Dendritic cell treated with granulocyte-macrophage colony-stimulating factor and Interleukin-4, amounts not matched to agents 40 ng/mL and 50 ng/mL, for 4 days (primary cell): ENCODE measurements at regions of chr3 and their contacts with region 1.

Region 1: GRCh38 chr3:13346481-13347389 is 73.4 kb downstream of the NUP210 start:
- H3K4me3 Mint-ChIP-seq: no peak overlapping the region
- H3K27ac Mint-ChIP-seq: peak overlapping the region; percentile 71
- H3K4me1 Mint-ChIP-seq: peaks cover 37% of the 10 kb centered on the region
- H3K27me3 Mint-ChIP-seq: no peaks in the 10 kb centered on the region

Region 2: GRCh38 chr3:13378155-13378554 is 31.4 kb after region 1 on chr3:
- intact Hi-C with region 1: no loop called
- H3K4me3 Mint-ChIP-seq: no peak overlapping the region
- H3K27ac Mint-ChIP-seq: no peak overlapping the region
- H3K4me1 Mint-ChIP-seq: peaks cover 17% of the 10 kb centered on the region
- H3K27me3 Mint-ChIP-seq: no peaks in the 10 kb centered on the region

Region 3: GRCh38 chr3:13391308-13391707 is 44.6 kb after region 1 on chr3:
- intact Hi-C with region 1: no loop called
- H3K4me3 Mint-ChIP-seq: no peak overlapping the region
- H3K27ac Mint-ChIP-seq: no peak overlapping the region
- H3K4me1 Mint-ChIP-seq: peaks cover 11% of the 10 kb centered on the region
- H3K27me3 Mint-ChIP-seq: no peaks in the 10 kb centered on the region

Region 4: GRCh38 chr3:13414040-13414729 is 67.5 kb after region 1 on chr3:
- intact Hi-C with region 1: loop called (anchors 5 kb)
- H3K4me3 Mint-ChIP-seq: peak overlapping the region; percentile 65
- H3K27ac Mint-ChIP-seq: peak overlapping the region; percentile 91
- H3K4me1 Mint-ChIP-seq: peaks cover 73% of the 10 kb centered on the region
- H3K27me3 Mint-ChIP-seq: no peaks in the 10 kb centered on the region